ENCODE measurements at regions of chr1 and their contacts with region 1.

Region 1: DNA sequence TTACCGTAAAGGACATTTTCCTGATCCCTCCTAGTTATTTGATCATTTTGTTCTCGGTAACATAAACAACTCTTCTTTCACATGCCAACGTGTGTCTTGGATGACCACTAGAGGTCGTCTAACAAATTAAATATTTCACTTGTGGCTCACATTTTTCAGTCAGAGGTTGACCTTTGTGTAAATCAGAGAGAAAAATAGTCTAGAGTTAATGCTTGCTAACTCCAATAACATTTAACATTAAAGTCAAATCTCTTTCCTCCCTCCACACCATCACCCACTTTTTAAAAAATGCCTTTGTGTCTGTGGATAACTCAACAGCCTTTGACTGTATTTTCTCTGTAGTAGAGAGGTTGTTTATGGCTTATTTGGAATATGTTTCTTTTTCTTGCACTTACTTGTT is 220.5 kb upstream of the B3GALT2 start:
- DNase-seq: peak in 6 of 9 donors; percentile 30 to 54 (median 48)
- ATAC-seq: peak; percentile 70
- H3K4me3 ChIP-seq: no peak overlapping the region
- H3K4me3 Mint-ChIP-seq: peak overlapping the region in 3 of 10 donors; percentile 3 to 11 (median 5)
- H3K27ac ChIP-seq: no peak overlapping the region
- H3K27ac Mint-ChIP-seq: peak overlapping the region in 5 of 9 donors; percentile 0 to 68 (median 10)
- H3K4me1 ChIP-seq: peaks cover 4 to 11% of the 10 kb centered on the region in 2 donors
- H3K4me1 Mint-ChIP-seq: peaks cover 11 to 34% (median 24%) of the 10 kb centered on the region in 7 donors
- H3K27me3 ChIP-seq: no peaks in the 10 kb centered on the region
- H3K27me3 Mint-ChIP-seq: no peaks in the 10 kb centered on the region

Region 2: DNA sequence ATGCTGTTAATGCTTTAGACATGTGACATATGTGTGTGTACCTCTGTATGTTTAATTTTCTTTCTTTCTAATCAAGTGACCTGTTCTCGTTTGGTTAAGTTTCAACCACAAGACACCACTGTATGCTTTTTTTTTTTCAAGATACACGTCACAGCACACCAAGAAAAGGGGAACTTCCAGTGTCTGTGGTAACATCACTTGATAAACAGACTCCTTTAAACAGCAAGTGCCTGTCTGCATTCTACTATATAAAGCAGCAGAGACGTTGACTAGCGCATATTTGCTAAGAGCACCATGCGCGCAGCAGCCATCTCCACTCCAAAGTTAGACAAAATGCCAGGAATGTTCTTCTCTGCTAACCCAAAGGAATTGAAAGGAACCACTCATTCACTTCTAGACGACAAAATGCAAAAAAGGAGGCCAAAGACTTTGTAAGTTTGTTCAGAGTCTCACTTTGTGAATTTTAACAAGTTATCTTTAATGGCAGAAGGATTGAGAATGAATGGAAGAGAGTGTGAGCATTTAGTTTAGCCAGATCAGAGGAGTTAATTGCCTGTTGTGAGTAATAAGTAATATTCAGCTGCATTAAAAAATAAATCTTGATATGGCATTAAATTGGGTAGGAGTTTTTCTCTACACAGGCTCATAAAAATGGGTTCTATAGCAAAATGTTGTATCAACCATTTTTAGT is 831.3 kb before region 1 on chr1 and contains the start of gene RGS1:
- CTCF ChIA-PET with region 1: no interaction called
- POLR2A ChIA-PET with region 1: no interaction called
- intact Hi-C with region 1: no loop called
- DNase-seq: peak; percentile 39 to 87 (median 73)
- ATAC-seq: peak; percentile 90
- H3K4me3 ChIP-seq: peak within 1 kb of the TSS; percentile 52
- H3K4me3 Mint-ChIP-seq: peak within 1 kb of the TSS; percentile 48 to 94 (median 81)
- H3K27ac ChIP-seq: peak within 1 kb of the TSS; percentile 65
- H3K27ac Mint-ChIP-seq: peak within 1 kb of the TSS; percentile 87 to 98 (median 94)
- H3K4me1 ChIP-seq: peaks cover 30 to 46% of the 10 kb centered on the region in 2 donors
- H3K4me1 Mint-ChIP-seq: peaks cover 22 to 86% (median 66%) of the 10 kb centered on the region in 7 donors
- H3K27me3 ChIP-seq: no peaks in the 10 kb centered on the region
- H3K27me3 Mint-ChIP-seq: no peaks in the 10 kb centered on the region
- total RNA-seq, gene RGS1: 3.4 to 607 (median 22.1) TPM

Region 3: DNA sequence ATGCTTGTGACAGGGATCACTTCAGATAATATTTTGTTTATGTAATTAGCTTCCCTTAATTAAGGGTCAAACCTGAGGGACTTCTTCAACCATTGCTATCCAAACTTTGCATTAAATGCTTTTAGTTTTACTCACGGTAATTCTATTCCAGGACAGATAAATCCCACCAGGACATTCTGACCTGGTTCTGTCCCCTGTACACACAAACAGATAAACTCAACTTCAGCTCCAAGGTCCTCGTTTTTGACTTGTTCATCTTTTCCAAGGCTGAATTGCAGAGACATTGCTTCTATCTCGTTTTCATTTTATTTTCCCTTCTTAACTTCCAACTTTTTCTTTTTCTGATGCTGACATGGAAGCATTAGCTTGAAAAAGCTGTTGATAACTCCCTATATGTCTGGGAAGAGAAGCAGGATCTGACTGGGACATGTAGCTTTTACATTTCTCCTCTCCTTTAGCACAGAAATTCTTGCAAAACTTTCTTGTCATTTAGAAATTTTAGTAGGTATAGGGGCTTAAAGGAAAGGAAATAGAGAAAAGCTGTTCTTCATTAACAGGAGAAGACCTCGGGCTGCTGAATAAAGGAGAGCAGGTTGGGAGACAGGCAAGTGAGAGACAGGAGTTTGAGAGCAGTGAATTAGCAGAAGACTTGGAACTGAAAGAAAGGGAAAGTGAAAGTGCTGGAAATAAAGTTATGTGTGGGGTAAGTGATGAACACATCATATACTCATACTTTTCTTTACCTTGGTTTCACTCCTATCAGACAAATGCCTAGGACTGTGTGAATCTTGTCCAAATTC is 11.2 kb after region 1 on chr1:
- CTCF ChIA-PET with region 1: no interaction called
- POLR2A ChIA-PET with region 1: interaction called, 6 read pairs
- intact Hi-C with region 1: loop called in 1 of 2 experiments (anchors 1 kb)
- DNase-seq: peak in 7 of 9 donors; percentile 16 to 64 (median 47)
- ATAC-seq: peak; percentile 81
- H3K4me3 ChIP-seq: peak overlapping the region; percentile 45
- H3K4me3 Mint-ChIP-seq: peak overlapping the region; percentile 68 to 93 (median 87)
- H3K27ac ChIP-seq: peak overlapping the region; percentile 58
- H3K27ac Mint-ChIP-seq: peak overlapping the region; percentile 88 to 95 (median 91)
- H3K4me1 ChIP-seq: peaks cover 16 to 19% of the 10 kb centered on the region in 2 donors
- H3K4me1 Mint-ChIP-seq: peaks cover 15 to 57% (median 46%) of the 10 kb centered on the region in 7 donors
- H3K27me3 ChIP-seq: no peaks in the 10 kb centered on the region
- H3K27me3 Mint-ChIP-seq: no peaks in the 10 kb centered on the region

Region 4: DNA sequence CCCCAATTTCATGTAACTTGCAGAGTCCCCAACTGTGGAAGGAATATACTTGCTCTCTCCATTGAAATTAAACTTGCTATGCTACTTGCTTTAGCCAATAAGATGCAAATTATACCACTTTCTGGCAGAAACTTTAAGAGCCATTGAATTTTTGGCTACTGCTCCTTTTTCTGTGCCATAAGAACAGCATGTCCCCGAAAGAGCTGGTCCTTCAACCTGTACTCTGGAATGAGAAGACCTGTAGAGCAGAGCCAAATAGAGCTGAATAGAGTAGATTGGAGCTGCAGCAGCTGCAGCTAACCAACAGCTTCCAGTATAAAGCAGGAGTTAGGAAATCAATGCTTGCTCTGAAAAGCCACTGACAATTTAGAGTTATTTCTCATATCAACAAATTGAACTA is 251.8 kb after region 1 on chr1:
- CTCF ChIA-PET with region 1: no interaction called
- POLR2A ChIA-PET with region 1: no interaction called
- intact Hi-C with region 1: no loop called
- DNase-seq: no peak
- ATAC-seq: no peak
- H3K4me3 ChIP-seq: no peak overlapping the region
- H3K4me3 Mint-ChIP-seq: no peak overlapping the region
- H3K27ac ChIP-seq: no peak overlapping the region
- H3K27ac Mint-ChIP-seq: no peak overlapping the region
- H3K4me1 ChIP-seq: no peaks in the 10 kb centered on the region
- H3K4me1 Mint-ChIP-seq: peaks cover 0 to 12% (median 0%) of the 10 kb centered on the region in 7 donors
- H3K27me3 ChIP-seq: no peaks in the 10 kb centered on the region
- H3K27me3 Mint-ChIP-seq: no peaks in the 10 kb centered on the region

Region 5: DNA sequence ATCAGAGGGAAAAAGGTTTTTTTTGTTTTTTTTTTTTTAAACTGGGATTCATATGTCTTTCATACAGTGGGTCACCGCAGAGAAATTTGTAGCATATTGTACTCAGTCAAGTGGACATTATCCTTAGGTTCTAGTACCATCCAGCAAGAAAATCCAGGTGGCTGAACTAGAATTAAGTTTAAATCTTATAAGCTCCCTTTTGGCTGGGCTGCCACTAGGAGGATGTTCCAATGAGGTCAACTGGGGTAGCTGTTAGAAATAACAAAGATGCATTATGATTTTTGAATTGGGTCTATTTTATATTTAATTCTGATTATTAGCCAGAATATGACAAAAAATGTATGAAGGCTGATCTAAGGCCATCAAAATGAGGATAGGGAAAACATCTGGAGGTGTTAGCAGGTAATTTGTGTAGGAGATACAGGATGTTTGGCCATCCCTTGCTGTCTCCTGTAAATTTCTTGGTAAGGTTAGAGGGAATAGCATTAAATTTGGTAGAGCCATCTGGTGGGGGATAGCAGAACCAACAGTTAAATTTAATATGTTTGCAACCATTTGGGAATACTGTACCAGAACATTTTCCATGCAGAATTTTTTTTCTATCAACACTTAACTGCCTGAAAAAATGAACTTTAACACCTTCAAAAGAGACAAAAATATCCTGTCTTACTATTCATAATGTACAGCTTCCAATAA is 348.0 kb after region 1 on chr1:
- CTCF ChIA-PET with region 1: no interaction called
- POLR2A ChIA-PET with region 1: no interaction called
- intact Hi-C with region 1: loop called (anchors 1 to 5 kb)
- DNase-seq: no peak
- ATAC-seq: no peak
- H3K4me3 ChIP-seq: no peak overlapping the region
- H3K4me3 Mint-ChIP-seq: no peak overlapping the region
- H3K27ac ChIP-seq: no peak overlapping the region
- H3K27ac Mint-ChIP-seq: no peak overlapping the region
- H3K4me1 ChIP-seq: no peaks in the 10 kb centered on the region
- H3K4me1 Mint-ChIP-seq: peaks cover 0 to 6% (median 0%) of the 10 kb centered on the region in 7 donors
- H3K27me3 ChIP-seq: no peaks in the 10 kb centered on the region
- H3K27me3 Mint-ChIP-seq: no peaks in the 10 kb centered on the region

Region 6: GRCh38 chr1:194052514-194053333 is 645.8 kb after region 1 on chr1:
- CTCF ChIA-PET with region 1: no interaction called
- POLR2A ChIA-PET with region 1: no interaction called
- intact Hi-C with region 1: loop called in 1 of 2 experiments (anchors 5 kb)
- DNase-seq: peak in 6 of 9 donors; percentile 21 to 54 (median 44)
- ATAC-seq: peak; percentile 56
- H3K4me3 ChIP-seq: peak overlapping the region; percentile 9
- H3K4me3 Mint-ChIP-seq: peak overlapping the region; percentile 41 to 83 (median 71)
- H3K27ac ChIP-seq: peak overlapping the region; percentile 63
- H3K27ac Mint-ChIP-seq: peak overlapping the region; percentile 93 to 98 (median 96)
- H3K4me1 ChIP-seq: peaks cover 7 to 61% of the 10 kb centered on the region in 2 donors
- H3K4me1 Mint-ChIP-seq: peaks cover 43 to 82% (median 69%) of the 10 kb centered on the region in 7 donors
- H3K27me3 ChIP-seq: no peaks in the 10 kb centered on the region
- H3K27me3 Mint-ChIP-seq: no peaks in the 10 kb centered on the region

Region 7: GRCh38 chr1:194289569-194290266 is 882.8 kb after region 1 on chr1:
- CTCF ChIA-PET with region 1: interaction called, 4 read pairs
- POLR2A ChIA-PET with region 1: no interaction called
- intact Hi-C with region 1: loop called in 1 of 2 experiments (anchors 1 kb)
- DNase-seq: peak in 8 of 9 donors; percentile 23 to 84 (median 76)
- ATAC-seq: peak; percentile 97
- H3K4me3 ChIP-seq: peak overlapping the region; percentile 0
- H3K4me3 Mint-ChIP-seq: peak overlapping the region; percentile 38 to 71 (median 54)
- H3K27ac ChIP-seq: no peak overlapping the region
- H3K27ac Mint-ChIP-seq: peak overlapping the region in 7 of 9 donors; percentile 43 to 84 (median 69)
- H3K4me1 ChIP-seq: peaks cover 14 to 21% of the 10 kb centered on the region in 2 donors
- H3K4me1 Mint-ChIP-seq: peaks cover 5 to 47% (median 40%) of the 10 kb centered on the region in 7 donors
- H3K27me3 ChIP-seq: no peaks in the 10 kb centered on the region
- H3K27me3 Mint-ChIP-seq: no peaks in the 10 kb centered on the region

Measured in naive thymus-derived CD4-positive, alpha-beta T cell (primary cell).